ENCODE measurements at regions of chr2 and their contacts with region 1.

Region 1: GRCh38 chr2:218876562-218877219 is 4.0 kb upstream of the WNT10A start:
- DNase-seq: peak; percentile 51
- H3K4me3 ChIP-seq: no peak overlapping the region
- H3K27ac ChIP-seq: no peak overlapping the region
- H3K4me1 ChIP-seq: peaks cover 13% of the 10 kb centered on the region
- H3K27me3 ChIP-seq: no peaks in the 10 kb centered on the region
- CTCF ChIP-seq: peak; percentile 98 to 99

Region 2: DNA sequence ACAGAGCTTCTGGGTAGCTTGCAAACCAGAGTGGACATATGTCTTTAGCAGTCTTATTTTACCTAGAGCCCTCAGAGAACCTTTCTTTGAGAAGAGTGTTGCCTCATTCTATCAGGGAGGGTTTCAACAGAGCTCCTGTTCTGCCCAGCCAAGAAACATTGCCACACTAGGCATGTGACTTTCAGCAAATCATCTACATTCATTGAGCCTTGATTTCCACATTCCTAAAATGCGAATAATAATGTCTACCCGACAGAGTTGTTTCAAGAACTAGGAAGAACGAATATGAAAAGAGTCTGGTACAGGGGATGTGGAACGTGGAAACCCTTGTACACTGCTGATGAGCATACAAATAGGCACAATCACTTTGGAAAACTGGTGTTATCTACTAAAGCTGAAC is 37.3 kb before region 1 on chr2:
- CTCF ChIA-PET with region 1: no interaction called
- dilution Hi-C with region 1: no loop called
- in situ Hi-C with region 1: no loop called
- intact Hi-C with region 1: no loop called
- DNase-seq: peak; percentile 23
- H3K4me3 ChIP-seq: no peak overlapping the region
- H3K27ac ChIP-seq: no peak overlapping the region
- H3K4me1 ChIP-seq: peaks cover 7% of the 10 kb centered on the region
- H3K27me3 ChIP-seq: no peaks in the 10 kb centered on the region
- CTCF ChIP-seq: no peak

Region 3: DNA sequence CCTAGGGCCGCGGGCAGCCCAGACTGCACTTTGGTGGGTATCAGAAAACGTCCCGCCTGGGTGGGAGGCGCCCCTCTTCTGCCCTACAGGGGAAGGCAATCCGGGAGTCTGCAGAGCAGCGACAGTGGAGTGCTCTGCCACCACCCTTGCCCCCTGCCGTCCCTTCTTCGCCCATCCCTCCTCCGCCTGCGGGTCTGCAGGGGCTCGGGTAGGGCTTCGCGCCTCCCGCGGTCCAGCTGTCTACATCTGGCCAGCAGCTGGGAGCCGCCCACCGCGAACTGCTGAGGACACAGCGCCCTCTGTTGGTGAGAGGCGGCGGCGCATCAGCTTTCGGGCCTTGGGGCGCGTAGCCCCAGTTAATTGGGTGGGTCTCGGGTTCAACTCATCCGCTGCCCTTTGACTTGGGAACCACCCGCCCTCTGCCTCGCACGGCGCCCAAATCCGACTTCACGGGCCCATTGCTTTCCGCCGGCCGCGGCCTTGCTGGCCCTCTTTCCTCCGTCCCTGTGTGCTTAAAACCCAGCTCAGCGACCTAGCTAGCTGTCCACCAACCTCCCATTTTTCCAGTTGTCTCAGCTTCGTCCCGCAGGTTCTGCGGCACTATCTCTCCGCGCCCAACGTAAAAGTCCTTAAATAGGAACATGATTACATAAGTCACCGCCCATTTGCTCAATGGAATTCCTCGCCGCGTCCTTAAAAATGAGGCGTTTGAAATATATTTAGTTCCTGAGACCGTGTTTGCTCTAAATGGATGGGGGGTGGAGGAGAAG is 21.6 kb after region 1 on chr2:
- CTCF ChIA-PET with region 1: interaction called, 33 read pairs
- dilution Hi-C with region 1: no loop called
- in situ Hi-C with region 1: no loop called
- intact Hi-C with region 1: loop called (anchors 1 kb)
- DNase-seq: peak; percentile 36
- H3K4me3 ChIP-seq: no peak overlapping the region
- H3K27ac ChIP-seq: no peak overlapping the region
- H3K4me1 ChIP-seq: peaks cover 49% of the 10 kb centered on the region
- H3K27me3 ChIP-seq: no peaks in the 10 kb centered on the region
- CTCF ChIP-seq: peak; percentile 64 to 97

Region 4: DNA sequence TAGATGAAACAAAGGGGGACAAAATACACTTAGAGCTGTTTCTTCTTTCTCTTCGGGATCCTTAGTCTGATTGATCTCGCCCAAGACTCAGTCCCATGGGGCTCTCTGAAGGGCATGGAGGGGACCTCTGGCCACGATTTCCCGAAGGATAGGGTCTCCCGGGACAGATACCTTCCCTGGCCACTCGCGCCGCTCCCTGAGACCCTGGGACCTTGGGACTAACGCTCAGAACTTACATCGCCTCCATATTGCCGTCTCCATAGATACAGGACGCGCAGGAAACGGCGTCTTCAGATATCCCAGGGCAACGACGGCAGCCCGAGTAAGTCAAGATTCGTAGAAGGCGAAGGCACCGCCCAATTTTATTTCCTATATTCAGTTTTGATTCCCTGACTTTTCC is 164.6 kb after region 1 on chr2 and contains the start of gene CFAP65:
- CTCF ChIA-PET with region 1: interaction called, 28 read pairs
- dilution Hi-C with region 1: no loop called
- in situ Hi-C with region 1: no loop called
- intact Hi-C with region 1: no loop called
- DNase-seq: peak; percentile 46
- H3K4me3 ChIP-seq: peak within 1 kb of the TSS; percentile 26 to 38 (median 36)
- H3K27ac ChIP-seq: no peak within 1 kb of the TSS
- H3K4me1 ChIP-seq: no peaks in the 10 kb centered on the region
- H3K27me3 ChIP-seq: peaks cover 9% of the 10 kb centered on the region
- CTCF ChIP-seq: no peak
- total RNA-seq, gene CFAP65: 0.50 TPM in 1 of 2 donors, not detected in the other

Measured in mammary epithelial cell (primary cell).